Activated CD4-positive, alpha-beta T cell treated with anti-CD3 and anti-CD28 coated beads for 36 hours (primary cell): ENCODE measurements at regions of chr18 and their contacts with region 1.

Region 1: DNA sequence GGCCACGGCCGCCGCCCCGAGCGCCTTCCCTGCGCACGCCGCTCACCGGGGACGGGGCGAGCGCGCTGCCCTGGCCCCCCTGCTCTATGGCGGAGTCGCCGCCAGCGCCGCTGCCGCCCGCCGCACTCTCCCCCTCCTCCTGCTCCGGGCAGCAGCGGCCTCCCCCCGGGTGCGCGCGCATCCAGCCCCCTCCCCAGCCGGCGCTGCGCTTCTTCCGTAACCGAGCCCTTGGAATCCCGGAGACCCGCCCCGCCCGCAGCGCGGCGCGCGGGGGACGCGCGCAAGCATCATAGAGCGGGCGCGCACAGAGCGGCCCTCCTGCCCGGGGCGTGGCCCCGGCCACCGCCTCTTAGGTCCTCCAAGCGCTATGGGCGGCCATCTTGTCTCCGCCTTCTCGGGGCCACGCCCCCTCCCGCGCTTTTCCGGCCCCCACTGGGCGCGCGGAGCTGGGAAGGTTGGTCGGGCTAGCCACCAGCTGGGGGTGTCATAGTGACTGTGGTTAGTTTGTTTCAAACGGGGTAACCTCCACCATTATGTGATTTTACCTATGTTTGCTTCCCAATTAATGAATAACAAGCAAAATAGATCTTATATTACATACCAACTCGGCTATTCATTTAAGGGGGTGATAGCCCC is at the start of gene MBD2:
- DNase-seq: peak; percentile 96
- ATAC-seq: peak; percentile 90
- H3K4me3 Mint-ChIP-seq: peak within 1 kb of the TSS; percentile 98
- H3K27ac Mint-ChIP-seq: peak within 1 kb of the TSS; percentile 98
- H3K4me1 Mint-ChIP-seq: peaks cover 46% of the 10 kb centered on the region
- H3K27me3 Mint-ChIP-seq: no peaks in the 10 kb centered on the region
- total RNA-seq, gene MBD2: 134 to 143 TPM

Region 2: GRCh38 chr18:54013452-54013851 is 211.0 kb before region 1 on chr18:
- CTCF ChIA-PET with region 1: no interaction called
- POLR2A ChIA-PET with region 1: no interaction called
- intact Hi-C with region 1: no loop called
- DNase-seq: no peak
- ATAC-seq: no peak
- H3K4me3 Mint-ChIP-seq: no peak overlapping the region
- H3K27ac Mint-ChIP-seq: no peak overlapping the region
- H3K4me1 Mint-ChIP-seq: no peaks in the 10 kb centered on the region
- H3K27me3 Mint-ChIP-seq: peaks cover 2% of the 10 kb centered on the region

Region 3: GRCh38 chr18:54181856-54182602 is 42.5 kb before region 1 on chr18:
- CTCF ChIA-PET with region 1: interaction called, 5 read pairs
- POLR2A ChIA-PET with region 1: no interaction called
- intact Hi-C with region 1: loop called (anchors 1 to 2 kb)
- DNase-seq: no peak
- ATAC-seq: peak; percentile 89
- H3K4me3 Mint-ChIP-seq: no peak overlapping the region
- H3K27ac Mint-ChIP-seq: no peak overlapping the region
- H3K4me1 Mint-ChIP-seq: peaks cover 10% of the 10 kb centered on the region
- H3K27me3 Mint-ChIP-seq: no peaks in the 10 kb centered on the region

Region 4: DNA sequence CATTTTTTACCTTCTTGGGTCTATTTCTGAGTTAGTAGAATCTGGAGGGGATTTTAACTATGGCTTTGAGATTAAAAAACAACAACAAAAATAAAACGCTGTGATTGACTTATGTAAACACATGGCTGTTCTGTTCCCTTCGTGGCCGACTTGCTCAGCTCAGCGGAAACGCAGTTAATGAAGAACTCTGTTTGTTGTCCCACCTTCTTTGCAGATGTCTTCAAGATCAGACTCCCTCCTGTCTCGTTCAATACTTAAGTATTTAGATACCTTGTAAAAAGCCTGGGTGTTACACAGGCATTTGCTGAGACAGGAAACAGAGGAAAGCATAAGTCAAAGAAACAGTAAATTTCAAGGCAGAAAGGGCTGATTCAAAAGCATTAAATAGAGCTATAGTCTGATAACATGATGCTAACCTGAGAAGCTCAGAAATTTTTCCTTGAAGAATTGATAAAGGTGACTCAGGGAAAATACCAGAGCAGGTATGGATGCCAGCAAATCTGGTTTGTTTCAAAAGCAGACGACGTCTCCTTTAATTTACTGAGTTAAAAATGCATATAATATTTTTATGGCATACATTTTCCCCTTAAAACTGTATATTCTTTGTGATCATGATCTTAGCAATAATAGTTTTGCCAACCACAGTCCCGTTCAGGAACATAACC is 23.1 kb after region 1 on chr18:
- CTCF ChIA-PET with region 1: no interaction called
- POLR2A ChIA-PET with region 1: no interaction called
- intact Hi-C with region 1: loop called in 1 of 2 experiments (anchors 1 kb)
- DNase-seq: no peak
- ATAC-seq: no peak
- H3K4me3 Mint-ChIP-seq: no peak overlapping the region
- H3K27ac Mint-ChIP-seq: peak overlapping the region; percentile 88
- H3K4me1 Mint-ChIP-seq: peaks cover 26% of the 10 kb centered on the region
- H3K27me3 Mint-ChIP-seq: peaks cover 2% of the 10 kb centered on the region

Region 5: DNA sequence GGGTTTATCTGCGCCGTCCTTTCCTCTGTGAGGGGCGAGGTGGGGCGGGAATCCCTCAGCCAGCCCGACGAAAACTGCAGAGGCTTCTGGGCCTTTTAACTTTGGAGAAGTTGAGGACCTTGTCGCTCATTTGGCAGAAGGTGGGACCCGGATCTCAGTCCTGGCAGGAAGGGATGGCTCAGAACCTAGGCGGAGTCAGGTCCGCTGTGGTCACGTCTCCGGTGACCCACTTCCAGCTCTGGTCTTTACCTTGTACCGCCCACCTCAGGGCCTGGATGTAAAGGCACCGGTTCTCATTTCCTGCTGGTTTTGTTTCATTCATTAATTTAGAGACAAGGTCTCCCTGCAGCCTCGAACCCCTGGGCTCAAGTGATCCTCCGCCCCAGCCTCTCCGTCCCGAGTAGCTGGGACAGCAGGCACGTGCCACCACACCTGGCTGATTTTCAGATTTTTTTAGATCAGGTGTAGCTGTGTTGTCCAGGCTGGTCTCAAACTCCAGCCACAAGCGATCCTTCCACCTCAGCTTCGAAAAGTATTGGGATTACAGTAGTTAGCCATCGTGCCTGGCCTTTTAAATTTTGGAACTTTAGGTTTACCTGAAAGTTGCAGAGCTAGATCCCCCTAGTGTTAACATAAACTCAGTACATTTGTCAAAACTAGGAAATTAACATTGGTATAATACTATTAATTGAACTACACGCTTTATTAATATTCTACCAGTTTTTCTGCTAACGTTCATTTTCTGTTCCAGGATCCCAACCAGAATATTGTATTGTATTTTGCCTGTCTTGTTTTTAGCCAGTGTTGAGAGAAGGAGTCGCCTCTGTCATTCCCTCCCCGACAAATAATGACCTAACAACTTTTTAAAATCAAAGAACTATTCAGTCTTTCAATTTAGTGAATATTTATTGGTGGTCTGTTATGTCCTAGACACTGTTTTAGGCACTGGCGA is 45.7 kb after region 1 on chr18:
- CTCF ChIA-PET with region 1: interaction called, 35 read pairs
- POLR2A ChIA-PET with region 1: interaction called, 21 read pairs
- intact Hi-C with region 1: loop called (anchors 1 kb)
- DNase-seq: peak; percentile 75
- ATAC-seq: peak; percentile 63
- H3K4me3 Mint-ChIP-seq: peak overlapping the region; percentile 78
- H3K27ac Mint-ChIP-seq: peak overlapping the region; percentile 99
- H3K4me1 Mint-ChIP-seq: peaks cover 28% of the 10 kb centered on the region
- H3K27me3 Mint-ChIP-seq: no peaks in the 10 kb centered on the region

Region 6: GRCh38 chr18:54357660-54358494 is 133.4 kb after region 1 on chr18 and contains the starts of genes C18orf54 and STARD6:
- CTCF ChIA-PET with region 1: interaction called, 16 read pairs
- POLR2A ChIA-PET with region 1: interaction called, 13 read pairs
- intact Hi-C with region 1: loop called (anchors 1 to 2 kb)
- DNase-seq: peak; percentile 92
- ATAC-seq: peak; percentile 97
- H3K4me3 Mint-ChIP-seq: peak within 1 kb of the TSS; percentile 99
- H3K27ac Mint-ChIP-seq: peak within 1 kb of the TSS; percentile 97
- H3K4me1 Mint-ChIP-seq: peaks cover 16% of the 10 kb centered on the region
- H3K27me3 Mint-ChIP-seq: peaks cover 4% of the 10 kb centered on the region
- total RNA-seq, gene C18orf54: 8.5 to 9.9 TPM
- total RNA-seq, gene STARD6: 0.23 TPM in 1 of 2 experiments, not detected in the other

Region 7: GRCh38 chr18:54453996-54454395 is 229.5 kb after region 1 on chr18:
- CTCF ChIA-PET with region 1: no interaction called
- POLR2A ChIA-PET with region 1: no interaction called
- intact Hi-C with region 1: no loop called
- DNase-seq: no peak
- ATAC-seq: no peak
- H3K4me3 Mint-ChIP-seq: no peak overlapping the region
- H3K27ac Mint-ChIP-seq: no peak overlapping the region
- H3K4me1 Mint-ChIP-seq: no peaks in the 10 kb centered on the region
- H3K27me3 Mint-ChIP-seq: peaks cover 4% of the 10 kb centered on the region